CD8-positive, alpha-beta T cell (primary cell): ENCODE measurements at regions of chr12 and their contacts with region 1.

Region 1: GRCh38 chr12:132445884-132446632 is 43.9 kb upstream of the FBRSL1 start:
- DNase-seq: peak in 8 of 9 experiments; percentile 17 to 89 (median 72)
- ATAC-seq: peak; percentile 50
- H3K4me3 ChIP-seq: peak overlapping the region; percentile 41 to 53
- H3K4me3 Mint-ChIP-seq: peak overlapping the region; percentile 84
- H3K27ac ChIP-seq: peak overlapping the region; percentile 91 to 95
- H3K27ac Mint-ChIP-seq: peak overlapping the region; percentile 99
- H3K4me1 ChIP-seq: peaks cover 85% of the 10 kb centered on the region
- H3K4me1 Mint-ChIP-seq: peaks cover 57% of the 10 kb centered on the region
- H3K27me3 ChIP-seq: no peaks in the 10 kb centered on the region
- H3K27me3 Mint-ChIP-seq: no peaks in the 10 kb centered on the region
- CTCF ChIP-seq: no peak

Region 2: DNA sequence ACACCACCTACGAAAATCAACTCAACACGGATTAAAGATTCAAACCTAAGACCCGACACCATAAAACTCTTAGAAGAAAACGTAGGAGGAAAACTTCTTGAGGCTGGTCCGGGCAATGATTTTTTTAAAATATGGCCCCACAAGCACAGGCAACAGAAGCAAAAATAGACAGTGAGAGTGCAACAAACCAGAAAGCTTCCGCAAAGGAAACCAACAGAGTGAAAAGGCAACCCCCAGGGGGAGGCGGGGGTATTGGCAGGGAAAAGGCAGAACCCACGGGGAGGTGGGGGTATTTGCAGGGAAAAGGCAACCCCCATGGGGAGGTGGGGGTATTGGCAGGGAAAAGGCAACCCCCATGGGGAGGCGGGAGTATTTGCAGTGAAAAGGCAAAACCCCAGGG is 23.4 kb after region 1 on chr12:
- CTCF ChIA-PET with region 1: interaction called, 5 read pairs
- POLR2A ChIA-PET with region 1: interaction called, 3 read pairs
- intact Hi-C with region 1: loop called in 1 of 2 experiments (anchors 2 kb)
- DNase-seq: peak in 2 of 9 experiments; percentile 34 to 58
- ATAC-seq: peak; percentile 49
- H3K4me3 ChIP-seq: peak overlapping the region in 1 of 2 experiments; percentile 28
- H3K4me3 Mint-ChIP-seq: peak overlapping the region; percentile 69
- H3K27ac ChIP-seq: no peak overlapping the region
- H3K27ac Mint-ChIP-seq: peak overlapping the region; percentile 83
- H3K4me1 ChIP-seq: peaks cover 29% of the 10 kb centered on the region
- H3K4me1 Mint-ChIP-seq: peaks cover 37% of the 10 kb centered on the region
- H3K27me3 ChIP-seq: peaks cover 0 to 9% of the 10 kb centered on the region in 2 experiments
- H3K27me3 Mint-ChIP-seq: no peaks in the 10 kb centered on the region
- CTCF ChIP-seq: no peak

Region 3: DNA sequence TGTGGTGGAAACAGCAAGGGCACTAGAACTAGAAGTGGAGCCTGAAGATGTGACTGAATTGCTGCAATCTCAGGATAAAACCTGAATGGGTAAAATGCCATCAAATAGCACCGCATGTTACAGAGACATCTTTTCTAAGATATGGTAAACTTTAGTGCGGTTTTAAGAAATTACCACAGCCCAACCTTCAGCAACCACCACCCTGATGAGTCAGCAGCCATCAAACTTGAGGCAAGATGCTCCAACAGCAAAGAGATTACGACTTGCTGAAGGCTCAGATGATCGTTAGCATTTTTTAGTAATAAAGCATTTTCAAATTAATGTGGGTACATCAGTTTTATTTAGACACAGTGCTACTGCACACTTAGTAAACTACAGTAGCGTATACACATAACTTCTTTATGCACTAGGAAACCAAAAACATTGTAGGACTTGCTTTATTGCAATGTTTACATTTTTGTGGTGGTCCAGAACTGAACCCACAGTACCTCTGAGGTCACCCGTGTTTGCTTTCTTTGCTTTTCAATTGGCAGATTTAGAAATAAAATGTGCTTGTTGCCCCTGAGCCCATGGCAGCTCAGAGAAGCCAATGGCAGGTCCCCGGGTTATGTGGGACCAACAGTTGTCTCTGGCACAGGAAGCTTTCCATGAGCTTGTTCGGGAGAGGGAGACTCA is 366.7 kb after region 1 on chr12:
- CTCF ChIA-PET with region 1: no interaction called
- POLR2A ChIA-PET with region 1: no interaction called
- intact Hi-C with region 1: no loop called
- DNase-seq: peak in 4 of 9 experiments; percentile 35 to 61 (median 48)
- ATAC-seq: peak; percentile 56
- H3K4me3 ChIP-seq: no peak overlapping the region
- H3K4me3 Mint-ChIP-seq: no peak overlapping the region
- H3K27ac ChIP-seq: no peak overlapping the region
- H3K27ac Mint-ChIP-seq: peak overlapping the region; percentile 70
- H3K4me1 ChIP-seq: no peaks in the 10 kb centered on the region
- H3K4me1 Mint-ChIP-seq: peaks cover 15% of the 10 kb centered on the region
- H3K27me3 ChIP-seq: no peaks in the 10 kb centered on the region
- H3K27me3 Mint-ChIP-seq: no peaks in the 10 kb centered on the region
- CTCF ChIP-seq: no peak